Psoas muscle (tissue), 8 donors: ENCODE measurements at regions of chr5 and their contacts with region 1.

Region 1: DNA sequence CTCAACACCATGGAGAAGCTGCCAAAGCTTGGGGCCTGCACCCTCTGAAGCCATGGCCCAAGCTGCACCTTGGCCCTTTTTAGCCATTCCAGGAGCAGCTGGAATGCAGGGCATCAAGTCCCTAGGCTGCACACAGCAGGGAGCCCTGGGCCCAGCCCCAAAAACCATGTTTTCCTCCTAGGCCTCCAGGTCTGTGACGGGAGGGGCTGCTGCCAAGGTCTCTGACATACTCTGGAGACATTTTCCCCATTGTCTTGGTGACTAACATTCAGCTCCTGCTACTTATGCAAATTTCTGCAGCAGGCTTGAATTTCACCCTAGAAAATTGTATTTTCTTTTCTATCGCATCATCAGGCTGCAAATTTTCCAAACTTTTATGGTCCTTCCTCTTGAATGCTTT is 64.6 kb downstream of the ELOVL7 start:
- DNase-seq: no peak
- ATAC-seq: no peak
- H3K4me3 ChIP-seq: no peak overlapping the region
- H3K27ac ChIP-seq: no peak overlapping the region
- H3K4me1 ChIP-seq: no peaks in the 10 kb centered on the region
- H3K27me3 ChIP-seq: peaks cover 0 to 2% (median 0%) of the 10 kb centered on the region in 3 donors
- CTCF ChIP-seq: no peak

Region 2: DNA sequence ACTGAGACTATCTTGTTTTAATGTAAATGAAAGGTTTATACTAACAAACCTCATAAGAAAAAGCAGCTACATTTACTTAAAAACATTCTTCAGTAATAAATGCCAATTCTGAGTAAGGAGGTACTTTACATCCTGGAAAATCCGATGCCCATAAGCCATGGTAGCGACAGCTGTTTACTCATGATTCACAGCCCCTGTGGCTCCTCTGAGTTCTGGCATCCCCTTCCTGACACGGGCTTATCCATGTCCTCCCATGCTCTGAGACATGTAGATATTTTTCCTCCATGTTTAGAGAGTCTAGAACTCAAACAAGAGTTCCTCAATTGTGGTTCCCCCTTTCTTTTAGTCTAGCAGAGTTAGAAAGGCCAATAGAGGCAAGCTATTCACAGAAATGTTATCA is 16.4 kb before region 1 on chr5:
- intact Hi-C with region 1: loop called in 1 of 2 experiments (anchors 1 kb)
- DNase-seq: no peak
- ATAC-seq: no peak
- H3K4me3 ChIP-seq: no peak overlapping the region
- H3K27ac ChIP-seq: no peak overlapping the region
- H3K4me1 ChIP-seq: no peaks in the 10 kb centered on the region
- H3K27me3 ChIP-seq: no peaks in the 10 kb centered on the region
- CTCF ChIP-seq: no peak